Pancreas (tissue), 10 donors: ENCODE measurements at regions of chr11 and their contacts with region 1.

Region 1: DNA sequence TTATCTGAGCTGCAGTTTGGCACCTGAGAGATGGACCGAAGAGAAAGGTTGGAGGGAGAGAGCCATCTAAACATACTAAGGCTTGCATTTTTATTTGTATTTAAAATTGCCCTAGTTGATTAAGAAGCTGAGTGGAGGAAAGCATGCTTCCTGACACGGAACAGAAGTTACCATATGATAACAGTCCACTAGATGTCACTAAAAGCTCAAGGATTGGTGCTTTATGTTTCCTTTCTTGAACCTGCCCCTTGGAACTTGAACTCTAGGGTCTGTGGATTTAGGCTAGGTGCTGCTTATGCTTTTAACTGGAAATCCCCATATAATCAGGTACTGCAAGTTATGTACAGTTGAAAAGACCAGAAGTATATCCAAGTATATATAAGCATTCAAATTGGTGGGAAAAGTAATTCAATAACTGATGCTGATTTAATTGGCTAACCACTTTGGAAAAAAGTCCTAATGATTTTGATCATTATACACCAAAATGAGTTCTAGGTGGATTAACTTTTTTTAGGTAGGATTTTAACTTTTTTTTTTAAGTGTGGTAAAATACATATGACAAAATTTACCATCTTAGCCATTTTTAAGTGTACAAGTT is 9.5 kb downstream of the RBMXL2 start:
- DNase-seq: no peak
- ATAC-seq: peak in 3 of 4 donors; percentile 83 to 88 (median 87)
- H3K4me3 ChIP-seq: no peak overlapping the region
- H3K27ac ChIP-seq: no peak overlapping the region
- H3K4me1 ChIP-seq: no peaks in the 10 kb centered on the region
- H3K27me3 ChIP-seq: no peaks in the 10 kb centered on the region
- CTCF ChIP-seq: peak; percentile 20 to 71 (median 45)

Region 2: DNA sequence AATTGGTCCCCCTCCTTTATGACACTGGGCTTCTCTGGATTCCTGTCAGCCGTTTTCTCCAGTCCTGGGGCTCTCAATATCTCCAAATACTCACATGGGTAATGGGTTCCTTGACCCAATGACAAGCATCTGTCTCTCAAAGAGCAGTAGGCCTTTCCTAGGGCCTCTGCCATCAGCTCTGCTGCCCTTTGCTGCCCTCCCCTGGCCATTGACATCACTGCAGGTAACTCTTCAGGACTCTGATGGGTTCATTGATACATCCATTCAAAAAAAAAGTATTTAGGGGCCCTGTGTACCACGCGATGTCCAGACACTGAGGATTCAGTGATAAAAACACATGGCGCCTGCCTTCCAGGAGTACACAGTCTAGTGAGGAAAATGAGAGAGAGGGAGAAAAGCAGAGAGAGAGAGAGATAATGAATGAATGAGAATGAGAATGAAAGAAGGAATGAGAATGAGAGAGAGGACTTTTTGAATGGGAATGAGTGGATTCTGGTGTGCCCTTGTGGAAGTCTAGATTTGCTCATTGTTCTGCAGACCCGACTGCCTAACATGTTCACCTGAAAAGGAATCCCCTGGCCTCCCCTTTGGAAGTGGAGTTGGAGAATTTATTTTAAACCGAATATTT is 344.4 kb after region 1 on chr11:
- intact Hi-C with region 1: loop called in 1 of 3 experiments (anchors 5 kb)
- DNase-seq: peak in 5 of 6 donors; percentile 26 to 86 (median 70)
- ATAC-seq: peak; percentile 58 to 89 (median 88)
- H3K4me3 ChIP-seq: no peak overlapping the region
- H3K27ac ChIP-seq: no peak overlapping the region
- H3K4me1 ChIP-seq: peaks cover 0 to 8% (median 7%) of the 10 kb centered on the region in 3 donors
- H3K27me3 ChIP-seq: no peaks in the 10 kb centered on the region
- CTCF ChIP-seq: peak; percentile 60 to 82 (median 76)